SK-N-SH (cell line): ENCODE measurements at regions of chr1 and their contacts with region 1.

Region 1: DNA sequence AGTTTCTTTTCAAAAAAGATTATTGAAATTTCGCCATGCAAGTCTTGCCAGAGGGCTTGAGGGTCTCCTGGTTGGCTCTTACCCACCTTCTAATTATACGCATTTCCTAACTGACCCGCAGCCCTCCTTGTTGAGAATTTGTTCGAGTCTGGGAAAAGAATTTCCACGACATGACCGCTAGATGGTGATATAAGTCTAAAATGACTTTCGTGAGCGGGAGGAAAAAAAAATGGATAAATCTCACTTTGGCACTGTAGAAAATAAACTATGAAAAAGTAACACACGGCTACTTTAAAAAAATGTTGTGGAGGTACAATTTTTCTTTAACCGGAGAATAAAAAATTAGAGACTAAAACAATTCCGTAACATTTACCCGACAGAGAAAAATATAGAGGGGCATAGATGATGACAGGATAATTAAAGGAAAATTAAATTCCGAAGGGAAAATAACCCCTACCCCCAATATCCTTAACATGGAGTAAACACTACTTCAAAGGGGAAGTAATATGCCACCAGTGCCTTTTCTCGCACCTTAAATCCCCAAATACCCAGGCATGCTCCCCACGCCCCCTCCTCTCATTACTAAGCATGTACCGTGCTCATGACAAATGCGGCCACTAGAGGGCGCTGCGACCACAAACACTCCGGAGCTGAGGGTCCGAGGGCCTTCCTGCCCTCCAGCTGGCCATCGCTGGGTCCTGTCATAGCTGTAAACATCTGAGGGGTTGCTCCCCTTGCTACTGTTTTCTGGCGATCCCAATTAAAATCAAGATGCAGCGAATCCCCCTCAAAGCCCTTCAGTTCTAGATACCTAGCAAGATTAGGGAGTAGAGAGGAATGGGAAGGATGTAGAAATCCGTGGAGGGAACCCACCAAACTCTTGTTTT is 266.9 kb downstream of the ASTN1 start:
- DNase-seq: peak; percentile 79
- H3K4me3 ChIP-seq: peak overlapping the region; percentile 22 to 50; a peak in 2 of 4 replicates
- H3K27ac ChIP-seq: peak overlapping the region in 1 of 2 experiments; percentile 81; a peak in 2 of 4 replicates
- H3K4me1 ChIP-seq: peaks cover 0 to 12% of the 10 kb centered on the region in 2 experiments; a peak in 2 of 4 replicates
- H3K27me3 ChIP-seq: no peaks in the 10 kb centered on the region; the same call in 1 of the 2 replicates
- CTCF ChIP-seq: peak; percentile 94
- EP300 ChIP-seq: no peak
- RAD21 ChIP-seq: peak; percentile 87

Region 2: GRCh38 chr1:177164380-177165068 is 266.9 kb after region 1 on chr1 and contains the start of gene ASTN1:
- CTCF ChIA-PET with region 1: interaction called, 33 read pairs
- POLR2A ChIA-PET with region 1: no interaction called
- DNase-seq: peak; percentile 90
- H3K4me3 ChIP-seq: peak within 1 kb of the TSS; percentile 32 to 54; a peak in 2 of 4 replicates
- H3K27ac ChIP-seq: peak within 1 kb of the TSS in 1 of 2 experiments; percentile 90; a peak in 2 of 4 replicates
- H3K4me1 ChIP-seq: peaks cover 0 to 11% of the 10 kb centered on the region in 2 experiments; a peak in 2 of 4 replicates
- H3K27me3 ChIP-seq: peaks cover 11% of the 10 kb centered on the region; the same call in 1 of the 2 replicates
- CTCF ChIP-seq: no peak
- EP300 ChIP-seq: no peak
- RAD21 ChIP-seq: no peak
- polyA plus RNA-seq, gene ASTN1: 0.13 and 0.29 TPM in 2 replicates

Region 3: GRCh38 chr1:177181631-177182291 is 284.2 kb after region 1 on chr1:
- CTCF ChIA-PET with region 1: interaction called, 131 read pairs
- POLR2A ChIA-PET with region 1: no interaction called
- DNase-seq: peak; percentile 88
- H3K4me3 ChIP-seq: peak overlapping the region; percentile 37 to 54
- H3K27ac ChIP-seq: peak overlapping the region in 1 of 2 experiments; percentile 88; a peak in 2 of 4 replicates
- H3K4me1 ChIP-seq: peaks cover 0 to 33% of the 10 kb centered on the region in 2 experiments; a peak in 2 of 4 replicates
- H3K27me3 ChIP-seq: peaks cover 8% of the 10 kb centered on the region; the same call in 1 of the 2 replicates
- CTCF ChIP-seq: peak; percentile 74
- EP300 ChIP-seq: no peak
- RAD21 ChIP-seq: peak; percentile 86

Region 4: DNA sequence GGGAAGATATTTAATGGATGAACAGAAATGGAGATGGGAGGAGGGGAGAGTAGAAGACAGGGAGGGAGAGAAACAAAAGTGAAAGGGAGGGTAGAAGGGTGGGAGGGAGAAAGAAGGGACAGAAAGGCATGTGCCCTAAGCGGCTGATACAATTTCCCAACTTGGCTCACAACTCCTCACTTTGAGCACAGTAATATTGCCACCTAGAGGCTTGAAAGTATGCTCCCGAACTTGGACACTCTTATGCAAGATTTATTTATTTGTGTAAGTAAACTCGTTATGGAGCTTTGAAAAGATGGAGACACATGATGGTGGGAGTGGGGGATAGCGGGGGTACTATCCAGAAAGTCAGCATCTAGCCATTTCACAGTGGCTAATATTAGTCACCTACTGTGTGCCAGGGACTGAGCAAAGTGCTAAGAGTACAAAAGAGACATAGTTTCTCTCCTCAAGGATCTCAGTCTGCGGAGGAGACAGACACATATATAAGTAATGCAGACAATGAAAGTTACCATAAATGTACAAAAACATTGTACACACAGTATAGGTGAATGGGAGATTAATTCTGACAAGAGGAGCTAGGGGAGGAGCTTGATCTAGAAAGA is 882.6 kb after region 1 on chr1:
- CTCF ChIA-PET with region 1: interaction called, 53 read pairs
- POLR2A ChIA-PET with region 1: no interaction called
- DNase-seq: peak; percentile 40
- H3K4me3 ChIP-seq: no peak overlapping the region
- H3K27ac ChIP-seq: no peak overlapping the region
- H3K4me1 ChIP-seq: peaks cover 0 to 9% of the 10 kb centered on the region in 2 experiments; a peak in 2 of 4 replicates
- H3K27me3 ChIP-seq: no peaks in the 10 kb centered on the region
- CTCF ChIP-seq: peak; percentile 42
- EP300 ChIP-seq: no peak
- RAD21 ChIP-seq: peak; percentile 84

Region 5: GRCh38 chr1:177948336-177948972 is 1050.9 kb after region 1 on chr1:
- CTCF ChIA-PET with region 1: interaction called, 51 read pairs
- POLR2A ChIA-PET with region 1: no interaction called
- DNase-seq: peak; percentile 69
- H3K4me3 ChIP-seq: peak overlapping the region in 1 of 2 experiments; percentile 38; a peak in 1 of 4 replicates
- H3K27ac ChIP-seq: no peak overlapping the region
- H3K4me1 ChIP-seq: no peaks in the 10 kb centered on the region; a peak in 1 of 4 replicates
- H3K27me3 ChIP-seq: no peaks in the 10 kb centered on the region
- CTCF ChIP-seq: peak; percentile 97
- EP300 ChIP-seq: no peak
- RAD21 ChIP-seq: peak; percentile 70